ENCODE measurements at regions of chr6 and their contacts with region 1.

Region 1: GRCh38 chr6:54053881-54054391 is 57.3 kb upstream of the MLIP start:
- DNase-seq: peak; percentile 82
- H3K4me3 ChIP-seq: peak overlapping the region in 2 of 3 experiments; percentile 26 to 41
- H3K27ac ChIP-seq: no peak overlapping the region
- H3K4me1 ChIP-seq: peaks cover 10% of the 10 kb centered on the region
- H3K27me3 ChIP-seq: no peaks in the 10 kb centered on the region
- CTCF ChIP-seq: no peak
- POLR2A ChIP-seq: no peak

Region 2: GRCh38 chr6:53998303-53998702 is 55.6 kb before region 1 on chr6:
- CTCF ChIA-PET with region 1: interaction called, 3 read pairs
- POLR2A ChIA-PET with region 1: no interaction called
- dilution Hi-C with region 1: no loop called
- intact Hi-C with region 1: loop called (anchors 2 kb)
- DNase-seq: peak; percentile 15
- H3K4me3 ChIP-seq: no peak overlapping the region
- H3K27ac ChIP-seq: no peak overlapping the region
- H3K4me1 ChIP-seq: peaks cover 8% of the 10 kb centered on the region
- H3K27me3 ChIP-seq: no peaks in the 10 kb centered on the region
- CTCF ChIP-seq: no peak
- POLR2A ChIP-seq: no peak

Region 3: GRCh38 chr6:54267798-54268197 is 213.9 kb after region 1 on chr6:
- CTCF ChIA-PET with region 1: no interaction called
- POLR2A ChIA-PET with region 1: no interaction called
- dilution Hi-C with region 1: no loop called
- intact Hi-C with region 1: loop called (anchors 5 kb)
- DNase-seq: peak; percentile 65
- H3K4me3 ChIP-seq: no peak overlapping the region
- H3K27ac ChIP-seq: no peak overlapping the region
- H3K4me1 ChIP-seq: peaks cover 7% of the 10 kb centered on the region
- H3K27me3 ChIP-seq: no peaks in the 10 kb centered on the region
- CTCF ChIP-seq: peak; percentile 44 to 48
- POLR2A ChIP-seq: no peak